ENCODE measurements at regions of chr7 and their contacts with region 1.

Region 1: DNA sequence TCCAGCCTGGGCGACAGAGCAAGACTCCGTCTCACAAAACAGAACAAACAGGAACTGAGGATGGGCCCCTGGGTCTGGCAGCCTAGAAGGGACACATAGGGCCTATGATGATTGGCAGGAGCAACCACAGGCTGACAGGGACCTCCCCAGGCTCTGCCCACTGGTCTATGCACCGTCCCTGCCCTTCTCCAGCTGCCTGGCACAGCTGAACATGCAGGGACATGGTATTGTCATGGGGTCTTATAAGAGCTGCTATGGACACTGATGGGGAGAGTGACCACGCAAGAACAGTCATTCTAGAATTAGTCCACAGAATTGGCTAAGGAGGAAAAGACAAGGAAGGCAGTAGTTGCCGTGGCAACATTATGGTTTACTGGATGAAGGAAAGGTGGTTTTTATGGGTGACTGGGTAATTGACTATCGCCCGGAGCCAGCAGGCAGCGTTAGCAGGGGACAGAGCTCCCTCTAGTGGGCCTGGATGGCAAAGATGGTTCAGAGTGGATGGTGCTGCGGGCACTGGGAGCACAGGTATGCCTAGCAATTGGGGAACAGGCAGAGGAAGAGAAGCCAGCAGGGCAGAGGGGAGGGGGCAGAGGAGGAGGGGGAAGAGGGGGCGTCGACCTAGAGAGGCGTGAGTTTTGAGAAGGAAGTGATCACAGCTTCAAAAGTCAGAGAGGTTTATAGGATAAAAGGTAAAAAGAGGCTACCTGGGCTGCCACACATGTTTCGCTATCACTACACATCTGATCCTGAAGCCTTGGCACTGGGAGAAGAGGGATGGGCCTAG is 7.8 kb upstream of the TRIM56 start:
- DNase-seq: peak; percentile 70
- H3K4me3 ChIP-seq: no peak overlapping the region
- H3K27ac ChIP-seq: no peak overlapping the region
- H3K4me1 ChIP-seq: no peaks in the 10 kb centered on the region
- H3K27me3 ChIP-seq: peaks cover under 1 to 4% of the 10 kb centered on the region in 2 experiments
- CTCF ChIP-seq: peak; percentile 88 to 94
- POLR2A ChIP-seq: no peak

Region 2: GRCh38 chr7:100171087-100171681 is 906.3 kb before region 1 on chr7:
- CTCF ChIA-PET with region 1: no interaction called
- POLR2A ChIA-PET with region 1: no interaction called
- dilution Hi-C with region 1: no loop called
- intact Hi-C with region 1: no loop called
- DNase-seq: no peak
- H3K4me3 ChIP-seq: peak overlapping the region in 1 of 3 experiments; percentile 25
- H3K27ac ChIP-seq: no peak overlapping the region
- H3K4me1 ChIP-seq: peaks cover 14% of the 10 kb centered on the region
- H3K27me3 ChIP-seq: peaks cover 4 to 13% of the 10 kb centered on the region in 2 experiments
- CTCF ChIP-seq: no peak
- POLR2A ChIP-seq: no peak

Region 3: DNA sequence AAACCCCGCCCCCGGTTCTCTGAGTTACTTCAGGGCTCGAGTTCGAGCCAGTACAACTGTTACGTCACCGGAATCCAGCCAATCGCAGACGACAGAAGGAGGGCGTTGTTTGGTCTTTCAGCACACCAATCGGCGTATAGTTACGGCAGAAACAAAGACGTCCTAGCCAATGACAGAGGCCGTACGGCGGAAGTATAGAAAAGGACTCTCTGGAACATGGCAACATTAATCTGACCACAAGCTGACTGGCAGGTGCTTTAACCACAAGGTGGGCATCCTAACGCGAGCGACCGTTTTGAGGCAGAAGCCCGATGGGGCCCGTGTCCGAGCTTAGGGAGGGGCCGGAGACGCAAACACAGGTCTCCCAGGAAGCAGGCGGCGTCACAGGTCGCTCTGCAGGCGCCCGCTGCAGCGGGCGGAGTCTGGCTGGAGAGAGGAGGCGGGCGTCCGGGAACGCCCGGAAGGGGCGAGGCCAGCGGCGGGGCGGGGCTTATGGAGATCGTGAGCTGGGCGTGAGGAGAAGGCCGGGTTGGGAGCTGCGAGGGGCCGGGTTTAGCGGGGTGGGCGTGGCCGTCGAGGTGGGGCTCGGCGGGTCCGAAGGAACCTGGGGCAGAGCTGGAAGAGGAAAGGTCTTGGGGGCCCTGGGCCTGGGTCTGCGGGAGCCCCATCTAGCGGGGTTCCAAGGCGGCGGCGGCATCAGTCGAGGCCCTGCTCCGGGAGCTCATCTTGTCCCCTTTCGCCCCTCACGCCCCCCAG is 465.3 kb before region 1 on chr7 and contains the start of gene MOSPD3:
- CTCF ChIA-PET with region 1: no interaction called
- POLR2A ChIA-PET with region 1: no interaction called
- dilution Hi-C with region 1: no loop called
- intact Hi-C with region 1: no loop called
- DNase-seq: peak; percentile 100
- H3K4me3 ChIP-seq: peak within 1 kb of the TSS; percentile 18 to 57 (median 56)
- H3K27ac ChIP-seq: peak within 1 kb of the TSS; percentile 46
- H3K4me1 ChIP-seq: peaks cover 10% of the 10 kb centered on the region
- H3K27me3 ChIP-seq: no peaks in the 10 kb centered on the region
- CTCF ChIP-seq: no peak
- POLR2A ChIP-seq: peak; percentile 69
- total RNA-seq, gene MOSPD3: 24.2 and 24.4 TPM in 2 replicates

Region 4: GRCh38 chr7:100896732-100897608 is 180.5 kb before region 1 on chr7:
- CTCF ChIA-PET with region 1: interaction called, 16 read pairs
- POLR2A ChIA-PET with region 1: no interaction called
- dilution Hi-C with region 1: no loop called
- intact Hi-C with region 1: loop called (anchors 1 kb)
- DNase-seq: no peak
- H3K4me3 ChIP-seq: no peak overlapping the region
- H3K27ac ChIP-seq: no peak overlapping the region
- H3K4me1 ChIP-seq: peaks cover 5% of the 10 kb centered on the region
- H3K27me3 ChIP-seq: peaks cover 9 to 19% of the 10 kb centered on the region in 2 experiments
- CTCF ChIP-seq: peak; percentile 71 to 88
- POLR2A ChIP-seq: no peak

Region 5: DNA sequence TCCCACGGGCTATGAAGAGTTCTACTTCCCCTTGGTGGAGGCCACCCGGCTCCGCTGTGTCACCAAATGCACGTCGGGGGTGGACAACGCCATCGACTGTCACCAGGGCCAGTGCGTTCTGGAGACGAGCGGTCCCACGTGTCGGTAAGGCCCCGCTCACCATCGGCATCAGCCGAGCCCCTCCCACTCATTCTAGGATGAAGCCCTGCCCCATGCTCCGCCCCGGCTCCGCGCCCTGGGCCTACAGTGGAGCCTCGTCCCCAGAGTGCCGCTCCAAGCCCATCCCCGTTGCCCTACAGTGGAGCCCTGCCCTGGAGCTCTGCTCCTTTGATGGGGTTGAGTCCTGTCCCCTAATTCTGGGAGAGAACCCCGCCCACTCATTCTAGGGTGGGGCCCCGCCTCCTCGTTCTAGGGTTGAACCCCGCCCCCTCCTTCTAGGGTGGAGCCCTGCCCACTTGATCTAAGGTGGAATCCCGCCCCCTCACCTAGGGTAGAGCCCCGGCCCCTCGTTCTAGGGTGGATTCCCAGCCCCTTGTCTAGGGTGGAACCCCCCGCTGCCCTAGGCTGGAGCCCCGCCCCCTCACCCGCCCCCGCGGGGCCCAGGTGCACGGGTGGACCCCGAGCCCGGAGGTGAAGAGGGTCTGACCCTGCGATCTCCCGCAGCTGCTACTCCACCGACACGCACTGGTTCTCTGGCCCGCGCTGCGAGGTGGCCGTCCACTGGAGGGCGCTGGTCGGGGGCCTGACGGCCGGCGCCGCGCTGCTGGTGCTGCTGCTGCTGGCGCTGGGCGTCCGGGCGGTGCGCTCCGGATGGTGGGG is 111.6 kb before region 1 on chr7:
- CTCF ChIA-PET with region 1: interaction called, 4 read pairs
- POLR2A ChIA-PET with region 1: no interaction called
- dilution Hi-C with region 1: no loop called
- intact Hi-C with region 1: loop called (anchors 1 kb)
- DNase-seq: peak; percentile 49
- H3K4me3 ChIP-seq: no peak overlapping the region
- H3K27ac ChIP-seq: no peak overlapping the region
- H3K4me1 ChIP-seq: peaks cover 2% of the 10 kb centered on the region
- H3K27me3 ChIP-seq: peaks cover 22 to 28% of the 10 kb centered on the region in 2 experiments
- CTCF ChIP-seq: peak; percentile 92 to 93
- POLR2A ChIP-seq: no peak

Region 6: DNA sequence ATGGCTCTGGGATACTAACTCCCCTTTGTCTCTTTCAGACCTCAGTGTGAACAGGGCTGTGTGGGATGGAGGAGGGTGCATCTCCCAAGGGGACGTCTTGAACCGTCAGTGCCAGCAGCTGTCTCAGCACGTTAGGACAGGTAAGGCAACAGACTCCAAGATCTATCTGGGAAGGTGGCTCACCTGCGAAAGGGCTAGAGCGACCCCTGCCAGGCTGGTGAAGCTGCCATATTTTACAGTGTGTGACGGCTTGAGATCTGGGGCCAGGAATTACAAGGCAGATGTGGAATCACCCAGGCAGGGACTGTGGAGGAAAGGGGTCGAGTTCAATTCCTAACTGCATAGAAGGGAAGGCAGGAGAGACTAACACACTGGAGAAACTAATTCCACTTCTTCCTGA is 46.4 kb before region 1 on chr7:
- CTCF ChIA-PET with region 1: no interaction called
- POLR2A ChIA-PET with region 1: no interaction called
- dilution Hi-C with region 1: no loop called
- intact Hi-C with region 1: no loop called
- DNase-seq: no peak
- H3K4me3 ChIP-seq: no peak overlapping the region
- H3K27ac ChIP-seq: no peak overlapping the region
- H3K4me1 ChIP-seq: no peaks in the 10 kb centered on the region
- H3K27me3 ChIP-seq: peaks cover 0 to 3% of the 10 kb centered on the region in 2 experiments
- CTCF ChIP-seq: no peak
- POLR2A ChIP-seq: no peak

Measured in endothelial cell of umbilical vein (primary cell).